Ascending aorta (tissue), 2 donors: ENCODE measurements at regions of chr16 and their contacts with region 1.

Region 1: GRCh38 chr16:13919683-13920509 is at the start of gene ERCC4:
- DNase-seq: peak; percentile 99 to 100
- H3K4me3 ChIP-seq: peak within 1 kb of the TSS; percentile 92 to 94
- H3K27ac ChIP-seq: peak within 1 kb of the TSS; percentile 68 to 78
- H3K4me1 ChIP-seq: peaks cover 4 to 9% of the 10 kb centered on the region in 2 donors
- H3K27me3 ChIP-seq: no peaks in the 10 kb centered on the region
- CTCF ChIP-seq: peak; percentile 70 to 94 (median 78)
- total RNA-seq, gene ERCC4: 6.2 TPM

Region 2: GRCh38 chr16:13110124-13110796 is 809.6 kb before region 1 on chr16:
- intact Hi-C with region 1: loop called (anchors 5 kb)
- DNase-seq: peak; percentile 12 to 91
- H3K4me3 ChIP-seq: no peak overlapping the region
- H3K27ac ChIP-seq: peak overlapping the region; percentile 74 to 83
- H3K4me1 ChIP-seq: peaks cover 4 to 18% of the 10 kb centered on the region in 2 donors
- H3K27me3 ChIP-seq: no peaks in the 10 kb centered on the region
- CTCF ChIP-seq: no peak

Region 3: GRCh38 chr16:13206606-13207005 is 713.3 kb before region 1 on chr16:
- intact Hi-C with region 1: no loop called
- DNase-seq: no peak
- H3K4me3 ChIP-seq: no peak overlapping the region
- H3K27ac ChIP-seq: no peak overlapping the region
- H3K4me1 ChIP-seq: no peaks in the 10 kb centered on the region
- H3K27me3 ChIP-seq: no peaks in the 10 kb centered on the region
- CTCF ChIP-seq: no peak

Region 4: DNA sequence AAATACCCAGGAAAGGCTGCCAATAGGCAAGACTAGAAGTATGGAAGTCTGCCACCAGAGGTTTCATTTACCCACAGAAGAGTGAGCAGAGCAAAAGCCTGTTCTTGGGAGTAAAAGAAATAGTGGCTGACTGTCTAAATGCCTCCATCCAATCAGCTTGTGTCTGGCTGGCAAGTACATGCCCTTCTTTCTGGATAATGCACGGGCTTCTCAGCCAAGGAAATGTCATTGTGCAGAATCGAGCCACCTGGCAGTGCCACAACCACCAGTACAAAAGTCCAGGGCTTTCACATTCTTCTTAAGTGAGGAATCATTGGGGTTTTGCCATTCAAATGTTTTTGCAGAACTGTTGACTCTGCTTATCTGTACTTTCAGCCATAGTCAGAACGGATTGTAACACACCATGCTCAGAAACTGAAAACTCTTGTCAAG is 10.0 kb before region 1 on chr16:
- intact Hi-C with region 1: loop called (anchors 1 kb)
- DNase-seq: peak; percentile 61 to 94
- H3K4me3 ChIP-seq: no peak overlapping the region
- H3K27ac ChIP-seq: peak overlapping the region; percentile 64 to 73
- H3K4me1 ChIP-seq: peaks cover 0 to 15% of the 10 kb centered on the region in 2 donors
- H3K27me3 ChIP-seq: no peaks in the 10 kb centered on the region
- CTCF ChIP-seq: peak in 1 of 3 experiments; percentile 9

Region 5: GRCh38 chr16:14070877-14071575 is 151.1 kb after region 1 on chr16 and contains the start of gene MRTFB:
- intact Hi-C with region 1: loop called (anchors 5 kb)
- DNase-seq: peak in 1 of 2 donors; percentile 85
- H3K4me3 ChIP-seq: peak within 1 kb of the TSS; percentile 100
- H3K27ac ChIP-seq: peak within 1 kb of the TSS; percentile 57 to 74
- H3K4me1 ChIP-seq: peaks cover 0 to 13% of the 10 kb centered on the region in 2 donors
- H3K27me3 ChIP-seq: no peaks in the 10 kb centered on the region
- CTCF ChIP-seq: no peak
- total RNA-seq, gene MRTFB: 89.4 TPM

Region 6: GRCh38 chr16:14249291-14250032 is 329.6 kb after region 1 on chr16:
- intact Hi-C with region 1: loop called (anchors 5 kb)
- DNase-seq: no peak
- H3K4me3 ChIP-seq: no peak overlapping the region
- H3K27ac ChIP-seq: no peak overlapping the region
- H3K4me1 ChIP-seq: no peaks in the 10 kb centered on the region
- H3K27me3 ChIP-seq: no peaks in the 10 kb centered on the region
- CTCF ChIP-seq: peak; percentile 62 to 83 (median 78)

Region 7: GRCh38 chr16:14300705-14301168 is 380.8 kb after region 1 on chr16:
- intact Hi-C with region 1: loop called (anchors 5 kb)
- DNase-seq: peak in 1 of 2 donors; percentile 90
- H3K4me3 ChIP-seq: peak overlapping the region; percentile 97 to 98
- H3K27ac ChIP-seq: peak overlapping the region; percentile 81 to 83
- H3K4me1 ChIP-seq: peaks cover 0 to 9% of the 10 kb centered on the region in 2 donors
- H3K27me3 ChIP-seq: no peaks in the 10 kb centered on the region
- CTCF ChIP-seq: peak; percentile 66 to 72 (median 69)

Region 8: GRCh38 chr16:14529010-14529669 is 609.2 kb after region 1 on chr16:
- intact Hi-C with region 1: loop called (anchors 2 kb)
- DNase-seq: peak; percentile 16 to 85
- H3K4me3 ChIP-seq: peak overlapping the region in 1 of 2 donors; percentile 52
- H3K27ac ChIP-seq: peak overlapping the region in 1 of 2 donors; percentile 62
- H3K4me1 ChIP-seq: peaks cover 9 to 24% of the 10 kb centered on the region in 2 donors
- H3K27me3 ChIP-seq: no peaks in the 10 kb centered on the region
- CTCF ChIP-seq: peak; percentile 62 to 83 (median 74)